ENCODE measurements at regions of chr11 and their contacts with region 1.

Region 1: DNA sequence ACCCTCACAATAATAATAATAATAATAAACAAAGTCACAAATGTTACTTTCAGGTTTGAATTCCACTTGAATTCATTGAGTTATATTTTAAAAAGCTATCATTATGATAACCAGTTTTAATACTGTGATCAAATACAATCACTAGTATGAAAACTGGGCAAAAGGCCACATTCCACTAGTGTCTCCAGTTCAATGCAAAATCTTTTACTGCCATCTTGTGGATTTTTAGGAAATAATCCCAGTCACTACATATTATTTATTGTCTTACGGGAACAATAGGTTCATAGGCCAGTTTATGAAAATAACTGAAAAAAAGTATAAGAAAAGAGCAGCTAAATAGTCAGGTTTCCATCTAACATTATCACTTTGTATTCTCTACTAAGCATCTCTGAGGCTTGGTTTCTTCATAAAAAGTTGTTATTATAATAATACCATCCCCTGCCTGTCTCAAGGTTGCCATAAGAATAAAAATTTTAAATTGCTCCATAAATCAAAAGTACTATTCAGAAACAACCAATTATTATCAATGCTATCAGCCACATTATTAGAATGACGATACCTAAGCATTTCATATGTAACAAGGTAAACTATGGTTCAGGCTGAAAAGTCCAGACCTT is 533.9 kb upstream of the CCDC90B start:
- DNase-seq: peak; percentile 12
- CTCF ChIP-seq: peak; percentile 53

Region 2: DNA sequence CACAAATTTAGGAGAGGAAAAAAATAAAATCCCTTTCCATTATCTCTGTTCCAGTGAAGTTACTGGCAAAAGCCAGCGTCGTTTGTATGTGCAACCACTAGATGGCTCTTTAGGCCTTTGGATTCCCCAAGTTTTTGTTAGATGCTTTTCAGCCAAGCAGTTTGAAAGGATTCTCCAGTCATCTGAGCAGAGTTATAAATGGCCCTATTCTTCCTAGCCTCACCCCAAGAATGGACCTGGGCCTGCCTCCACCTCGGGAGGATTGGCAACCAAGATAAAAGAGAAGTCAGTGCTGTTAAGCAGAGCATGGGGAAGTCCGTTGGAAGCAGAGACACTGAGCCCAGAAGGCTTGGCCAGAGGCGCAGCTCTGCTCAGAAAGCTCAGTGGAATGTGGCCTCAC is 1101.7 kb before region 1 on chr11:
- in situ Hi-C with region 1: loop called (anchors 25 kb)
- DNase-seq: peak; percentile 49
- CTCF ChIP-seq: peak; percentile 68

Region 3: GRCh38 chr11:82889133-82890001 is 930.7 kb before region 1 on chr11:
- in situ Hi-C with region 1: loop called (anchors 10 kb)
- DNase-seq: no peak
- CTCF ChIP-seq: no peak

Region 4: GRCh38 chr11:83241291-83241946 is 578.6 kb before region 1 on chr11:
- in situ Hi-C with region 1: loop called (anchors 10 kb)
- DNase-seq: peak; percentile 17
- CTCF ChIP-seq: peak; percentile 53

Region 5: DNA sequence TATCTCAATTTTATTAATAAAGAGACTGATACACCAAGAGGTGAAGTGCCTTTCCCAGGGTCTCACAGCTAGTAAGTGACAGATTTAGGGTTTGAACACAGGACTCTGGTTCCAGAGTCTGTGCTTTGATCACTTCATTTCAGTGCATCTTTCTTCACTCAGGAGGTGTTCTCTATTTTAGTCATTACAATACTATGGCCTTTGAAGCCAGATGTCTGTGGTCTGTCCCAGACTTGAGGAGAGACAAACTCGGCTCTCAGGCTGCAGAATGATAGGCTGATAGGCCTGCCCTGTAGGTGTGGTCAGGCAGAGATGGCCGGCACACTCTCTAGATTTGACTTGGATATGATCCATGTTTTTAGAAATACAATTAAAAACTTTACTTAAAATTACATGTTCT is 55.4 kb before region 1 on chr11:
- in situ Hi-C with region 1: no loop called
- DNase-seq: no peak
- CTCF ChIP-seq: no peak